Endothelial cell of umbilical vein (primary cell): ENCODE measurements at regions of chr1 and their contacts with region 1.

Region 1: GRCh38 chr1:27416387-27417111 is 24.1 kb downstream of the GPR3 start:
- DNase-seq: peak; percentile 80
- H3K4me3 ChIP-seq: no peak overlapping the region
- H3K27ac ChIP-seq: no peak overlapping the region
- H3K4me1 ChIP-seq: peaks cover 5% of the 10 kb centered on the region
- H3K27me3 ChIP-seq: no peaks in the 10 kb centered on the region
- CTCF ChIP-seq: peak; percentile 75 to 76
- POLR2A ChIP-seq: no peak

Region 2: DNA sequence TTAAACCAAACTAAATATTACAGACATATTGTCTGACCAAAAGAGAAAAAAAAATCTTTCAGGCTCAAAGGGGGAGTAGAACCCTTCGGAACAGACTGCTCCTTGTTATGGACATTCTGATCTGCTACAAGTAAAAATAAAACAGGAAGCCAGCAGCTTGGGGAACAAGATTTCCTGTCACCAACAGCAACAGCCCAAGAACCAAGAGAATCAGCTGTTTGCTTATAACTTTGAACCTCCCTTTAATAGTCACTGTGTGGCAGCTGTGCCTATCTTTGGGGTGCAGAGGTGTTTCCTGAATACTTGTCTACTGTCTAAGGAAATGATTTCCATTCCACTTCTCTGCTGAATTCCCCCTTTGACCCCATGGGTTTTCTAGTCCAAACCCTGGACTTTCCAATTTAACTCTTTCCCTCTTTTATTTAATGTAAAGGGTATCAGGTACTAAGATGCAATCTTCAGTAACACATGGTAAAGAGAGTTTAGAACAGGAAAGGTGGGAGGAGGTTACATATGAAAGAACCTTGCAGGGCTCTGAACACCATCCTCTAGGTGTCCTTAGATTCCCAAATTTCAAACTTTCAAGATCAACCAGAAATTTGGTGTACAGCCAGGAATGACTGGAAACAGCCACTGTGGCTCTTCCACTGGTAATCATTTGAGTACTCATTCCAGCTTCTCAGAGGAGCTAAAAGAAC is 14.5 kb after region 1 on chr1:
- CTCF ChIA-PET with region 1: interaction called, 70 read pairs
- POLR2A ChIA-PET with region 1: interaction called, 4 read pairs
- dilution Hi-C with region 1: no loop called
- intact Hi-C with region 1: no loop called
- DNase-seq: peak; percentile 77
- H3K4me3 ChIP-seq: no peak overlapping the region
- H3K27ac ChIP-seq: peak overlapping the region; percentile 92
- H3K4me1 ChIP-seq: peaks cover 55% of the 10 kb centered on the region
- H3K27me3 ChIP-seq: no peaks in the 10 kb centered on the region
- CTCF ChIP-seq: no peak
- POLR2A ChIP-seq: no peak

Region 3: GRCh38 chr1:27473755-27474154 is 57.2 kb after region 1 on chr1:
- CTCF ChIA-PET with region 1: interaction called, 10 read pairs
- POLR2A ChIA-PET with region 1: no interaction called
- dilution Hi-C with region 1: no loop called
- intact Hi-C with region 1: no loop called
- DNase-seq: no peak
- H3K4me3 ChIP-seq: no peak overlapping the region
- H3K27ac ChIP-seq: no peak overlapping the region
- H3K4me1 ChIP-seq: no peaks in the 10 kb centered on the region
- H3K27me3 ChIP-seq: no peaks in the 10 kb centered on the region
- CTCF ChIP-seq: no peak
- POLR2A ChIP-seq: no peak

Region 4: DNA sequence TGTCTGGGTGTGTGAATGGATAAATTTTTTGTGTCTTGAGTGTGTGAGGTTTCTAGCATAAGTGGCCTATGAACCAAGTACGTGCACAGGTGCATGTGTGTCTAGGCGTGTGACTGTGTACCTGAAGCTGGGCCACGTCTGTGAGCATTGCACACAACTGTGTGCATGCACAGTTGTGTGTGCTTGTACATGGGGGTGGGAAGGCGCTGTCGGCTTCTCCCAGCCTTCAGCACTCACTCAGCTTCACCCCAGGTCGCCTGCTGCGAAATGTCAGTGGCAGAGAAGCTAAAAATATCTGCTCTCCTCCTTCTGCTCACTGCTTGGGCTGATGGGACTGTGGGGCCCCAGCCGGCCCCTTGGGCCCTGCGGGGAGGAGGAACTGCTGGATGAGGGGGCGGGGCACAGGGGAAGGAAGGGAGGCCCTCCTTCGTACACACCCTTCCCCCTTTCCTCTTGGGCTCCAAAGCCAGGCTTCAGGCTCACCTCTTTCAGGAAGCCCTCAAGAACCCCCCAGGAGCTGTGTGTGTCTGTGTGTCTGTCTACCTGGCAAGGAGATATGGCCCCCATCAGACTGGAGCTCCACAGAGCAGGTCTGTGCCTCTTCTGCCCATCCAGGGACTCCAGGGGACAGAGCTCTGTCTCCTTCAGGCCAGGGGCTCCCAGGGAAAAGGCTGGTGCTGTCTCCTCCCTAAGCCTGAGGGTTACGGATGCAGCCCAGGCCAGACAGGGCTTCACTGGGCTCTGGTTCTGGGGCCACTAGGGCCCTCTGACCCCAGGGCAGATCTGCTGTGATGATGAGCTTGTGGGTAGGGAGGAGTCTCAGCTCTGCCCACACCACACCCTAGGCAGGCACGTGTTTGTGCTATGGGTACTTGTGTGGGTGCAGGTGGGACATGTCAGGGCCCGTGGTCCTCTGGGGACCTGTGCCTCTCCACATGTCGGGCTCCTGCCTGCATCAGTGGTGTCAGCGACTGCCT is 109.0 kb after region 1 on chr1:
- CTCF ChIA-PET with region 1: interaction called, 7 read pairs
- POLR2A ChIA-PET with region 1: no interaction called
- dilution Hi-C with region 1: no loop called
- intact Hi-C with region 1: loop called (anchors 5 kb)
- DNase-seq: no peak
- H3K4me3 ChIP-seq: no peak overlapping the region
- H3K27ac ChIP-seq: no peak overlapping the region
- H3K4me1 ChIP-seq: peaks cover 22% of the 10 kb centered on the region
- H3K27me3 ChIP-seq: peaks cover 3 to 5% of the 10 kb centered on the region in 2 experiments
- CTCF ChIP-seq: no peak
- POLR2A ChIP-seq: no peak

Region 5: DNA sequence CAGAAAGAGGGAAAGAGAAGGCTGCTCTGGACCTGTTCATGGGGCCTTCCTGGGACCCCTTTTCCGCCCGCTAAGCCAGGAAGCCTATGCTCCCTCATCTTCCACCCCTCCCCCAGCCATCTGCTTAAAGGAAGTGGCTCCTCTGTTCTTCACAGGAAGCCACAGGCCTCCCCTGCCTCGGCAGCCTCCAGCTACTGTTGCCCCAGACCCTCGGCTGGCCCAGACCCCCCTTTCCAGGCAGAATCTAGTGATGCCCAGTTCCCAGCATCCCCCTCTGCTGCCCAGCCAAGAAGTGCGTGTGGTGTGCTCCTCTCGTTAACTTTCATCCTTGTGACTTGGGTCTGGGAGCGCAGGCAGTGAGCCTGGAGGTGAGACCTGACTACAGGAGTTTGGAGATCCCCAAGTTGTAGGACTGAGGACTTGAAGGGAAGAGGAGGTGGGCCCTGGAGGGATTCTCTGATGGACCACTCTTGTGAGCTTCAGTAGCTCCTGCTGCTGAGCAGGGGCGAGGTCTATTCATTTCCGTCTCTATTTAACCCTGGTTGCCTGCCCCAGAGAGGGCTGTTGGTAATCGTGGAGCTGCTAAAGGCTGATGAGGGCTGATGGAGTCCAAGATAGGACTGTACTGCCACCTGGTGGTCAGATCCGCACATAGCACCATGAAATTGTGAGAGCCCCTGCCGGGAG is 246.3 kb after region 1 on chr1:
- CTCF ChIA-PET with region 1: interaction called, 14 read pairs
- POLR2A ChIA-PET with region 1: no interaction called
- dilution Hi-C with region 1: no loop called
- intact Hi-C with region 1: no loop called
- DNase-seq: peak; percentile 83
- H3K4me3 ChIP-seq: no peak overlapping the region
- H3K27ac ChIP-seq: no peak overlapping the region
- H3K4me1 ChIP-seq: peaks cover 14% of the 10 kb centered on the region
- H3K27me3 ChIP-seq: no peaks in the 10 kb centered on the region
- CTCF ChIP-seq: peak; percentile 80 to 85
- POLR2A ChIP-seq: no peak